IMR-90 (cell line): ENCODE measurements at regions of chr13 and their contacts with region 1.

Region 1: DNA sequence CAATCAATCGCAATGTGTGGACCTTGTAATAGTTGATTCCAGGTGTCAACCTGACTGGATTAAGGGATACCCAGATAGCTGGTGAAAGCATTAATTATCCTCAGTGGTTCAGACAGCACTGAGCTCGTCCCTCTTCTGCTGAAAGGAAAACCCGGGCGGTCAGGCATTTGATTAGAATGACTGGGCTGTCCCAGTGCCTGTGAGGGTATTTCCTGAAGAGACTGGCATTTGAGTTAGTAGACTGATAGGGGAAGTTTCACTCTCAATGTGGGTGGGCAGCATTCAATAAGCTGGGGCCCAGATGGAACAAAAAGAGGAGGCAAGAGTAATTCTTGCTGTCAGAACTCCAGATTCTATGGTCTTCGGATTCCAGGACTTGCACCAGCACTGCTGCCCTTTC is 31.9 kb downstream of the KPNA3 start:
- DNase-seq: no peak
- ATAC-seq: no peak
- H3K4me3 ChIP-seq: no peak overlapping the region
- H3K27ac ChIP-seq: no peak overlapping the region
- H3K4me1 ChIP-seq: no peaks in the 10 kb centered on the region
- H3K27me3 ChIP-seq: no peaks in the 10 kb centered on the region
- CTCF ChIP-seq: no peak
- POLR2A ChIP-seq: no peak
- RAD21 ChIP-seq: no peak

Region 2: GRCh38 chr13:49356223-49356622 is 404.3 kb before region 1 on chr13:
- CTCF ChIA-PET with region 1: no interaction called
- POLR2A ChIA-PET with region 1: no interaction called
- dilution Hi-C with region 1: no loop called
- in situ Hi-C with region 1: no loop called
- intact Hi-C with region 1: no loop called
- DNase-seq: peak; percentile 96
- ATAC-seq: peak; percentile 85
- H3K4me3 ChIP-seq: no peak overlapping the region
- H3K27ac ChIP-seq: no peak overlapping the region
- H3K4me1 ChIP-seq: peaks cover 8% of the 10 kb centered on the region
- H3K27me3 ChIP-seq: no peaks in the 10 kb centered on the region
- CTCF ChIP-seq: no peak
- POLR2A ChIP-seq: no peak
- RAD21 ChIP-seq: no peak

Region 3: GRCh38 chr13:49731766-49732165 is 28.8 kb before region 1 on chr13:
- CTCF ChIA-PET with region 1: no interaction called
- POLR2A ChIA-PET with region 1: no interaction called
- dilution Hi-C with region 1: no loop called
- in situ Hi-C with region 1: no loop called
- intact Hi-C with region 1: loop called (anchors 5 kb)
- DNase-seq: peak; percentile 91
- ATAC-seq: peak; percentile 56
- H3K4me3 ChIP-seq: no peak overlapping the region
- H3K27ac ChIP-seq: no peak overlapping the region
- H3K4me1 ChIP-seq: no peaks in the 10 kb centered on the region; the same call in 1 of the 2 replicates
- H3K27me3 ChIP-seq: no peaks in the 10 kb centered on the region
- CTCF ChIP-seq: no peak
- POLR2A ChIP-seq: no peak
- RAD21 ChIP-seq: no peak